ENCODE measurements at regions of chr2 and their contacts with region 1.

Region 1: GRCh38 chr2:216108967-216109921 is at the start of gene XRCC5:
- DNase-seq: peak; percentile 80 to 91 (median 89)
- H3K4me3 ChIP-seq: peak within 1 kb of the TSS; percentile 64 to 100 (median 94)
- H3K27ac ChIP-seq: peak within 1 kb of the TSS; percentile 18 to 99 (median 87)
- H3K27me3 ChIP-seq: no peaks in the 10 kb centered on the region
- CTCF ChIP-seq: peak in 30 of 56 donors; percentile 7 to 61 (median 36)
- total RNA-seq, gene XRCC5: 119 to 262 (median 192) TPM

Region 2: DNA sequence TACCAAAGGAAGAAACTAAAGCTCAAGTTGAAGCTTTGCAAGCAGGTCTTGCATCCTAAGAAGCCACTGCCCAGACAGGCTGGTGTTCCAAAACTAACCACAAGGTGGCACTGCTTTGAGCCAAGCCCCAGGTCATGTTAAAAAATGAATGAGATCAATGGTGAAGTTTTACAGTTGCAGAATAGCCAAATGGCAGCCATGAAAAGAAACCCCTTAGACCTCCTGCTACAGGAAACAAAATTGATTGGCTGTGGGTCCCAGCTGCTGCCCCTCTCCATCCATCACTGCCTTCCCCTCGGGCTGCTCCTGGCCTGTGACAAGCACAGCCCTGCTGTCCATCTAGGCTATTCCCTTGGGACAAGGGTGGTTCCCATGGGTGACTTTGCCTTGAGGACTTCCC is 75.2 kb before region 1 on chr2:
- intact Hi-C with region 1: loop called in 1 of 2 experiments (anchors 2 kb)
- DNase-seq: peak in 9 of 10 donors; percentile 45 to 84 (median 72)
- H3K4me3 ChIP-seq: no peak overlapping the region
- H3K27ac ChIP-seq: peak overlapping the region in 22 of 59 donors; percentile 8 to 73 (median 42)
- H3K27me3 ChIP-seq: no peaks in the 10 kb centered on the region
- CTCF ChIP-seq: peak; percentile 61 to 97 (median 88)

Region 3: DNA sequence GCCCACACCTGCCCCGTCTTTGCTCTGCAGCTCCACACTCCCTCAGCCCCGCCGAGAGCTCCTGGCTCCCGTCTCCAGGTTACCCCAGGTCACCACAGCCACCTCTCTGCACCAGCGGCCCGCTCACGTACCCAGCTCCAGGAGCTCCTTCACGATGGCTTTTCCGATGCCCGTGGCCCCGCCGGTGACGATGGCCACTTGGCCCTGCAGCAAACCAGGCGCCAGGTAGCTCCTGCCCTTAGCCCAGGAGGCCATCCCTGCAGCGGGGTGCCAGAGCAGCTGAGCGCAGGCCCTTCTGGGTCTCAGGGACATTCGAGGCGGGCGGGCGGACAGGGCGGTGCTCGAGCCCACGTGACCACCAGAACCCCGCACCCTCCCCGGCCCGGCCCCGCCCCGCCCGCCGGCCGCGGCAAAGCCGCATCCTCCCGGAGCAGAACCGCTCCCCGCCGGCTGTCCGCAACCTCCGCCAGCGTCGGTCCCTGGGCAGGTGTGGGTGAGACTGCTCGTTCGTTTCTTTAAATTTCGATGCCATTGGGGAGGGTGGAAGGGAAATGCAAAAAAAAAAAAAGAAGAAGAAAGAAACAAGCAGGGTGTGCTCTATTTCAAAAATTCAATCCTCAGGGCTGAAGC is 27.6 kb before region 1 on chr2 and contains the starts of genes PECR and TMEM169:
- intact Hi-C with region 1: loop called in 1 of 2 experiments (anchors 2 kb)
- DNase-seq: peak; percentile 75 to 94 (median 86)
- H3K4me3 ChIP-seq: peak within 1 kb of the TSS; percentile 64 to 96 (median 84)
- H3K27ac ChIP-seq: peak within 1 kb of the TSS in 58 of 59 donors; percentile 3 to 91 (median 80)
- H3K27me3 ChIP-seq: no peaks in the 10 kb centered on the region
- CTCF ChIP-seq: peak in 18 of 56 donors; percentile 5 to 40 (median 18)
- total RNA-seq, gene PECR: 8.9 to 25.8 (median 16.2) TPM
- total RNA-seq, gene TMEM169: 3.1 to 15.6 (median 9.6) TPM

Region 4: GRCh38 chr2:216498418-216499413 is 389.5 kb after region 1 on chr2 and contains the start of gene RPL37A:
- intact Hi-C with region 1: loop called (anchors 5 to 10 kb)
- DNase-seq: peak; percentile 90 to 96 (median 94)
- H3K4me3 ChIP-seq: peak within 1 kb of the TSS; percentile 53 to 96 (median 81)
- H3K27ac ChIP-seq: peak within 1 kb of the TSS; percentile 40 to 95 (median 87)
- H3K27me3 ChIP-seq: no peaks in the 10 kb centered on the region
- CTCF ChIP-seq: peak in 34 of 56 donors; percentile 6 to 53 (median 26)
- total RNA-seq, gene RPL37A: 791 to 1,871 (median 1,178) TPM

Measured in dorsolateral prefrontal cortex (tissue), 120 donors.